Caco-2 (cell line): ENCODE measurements at regions of chr10 and their contacts with region 1.

Region 1: DNA sequence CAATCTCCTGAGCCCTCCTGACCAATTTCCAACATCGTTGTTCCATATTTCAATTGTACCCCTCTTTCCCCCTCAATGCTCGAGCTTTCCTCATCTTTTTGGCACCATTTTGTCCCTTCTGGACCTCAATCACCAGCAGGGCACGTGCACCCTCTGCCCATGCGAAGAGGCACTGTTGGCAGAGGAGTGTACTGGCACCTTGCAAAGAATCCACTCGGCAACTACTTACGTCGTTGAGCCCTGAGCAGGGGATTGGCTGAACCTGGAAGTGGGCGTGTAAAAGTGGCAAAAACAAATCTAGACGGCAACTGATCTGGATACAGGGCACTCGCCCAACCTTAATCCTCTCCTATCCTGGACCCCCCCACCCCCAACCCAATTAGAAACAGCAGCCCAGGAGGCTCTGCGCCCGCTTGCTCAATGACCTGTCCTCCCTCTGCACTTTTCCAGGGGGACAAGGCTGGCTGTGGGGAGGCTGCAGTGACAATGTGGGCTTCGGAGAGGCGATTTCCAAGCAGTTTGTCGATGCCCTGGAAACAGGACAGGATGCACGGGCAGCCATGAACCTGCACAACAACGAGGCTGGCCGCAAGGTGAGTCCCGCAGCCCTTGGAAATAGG is 18.8 kb downstream of the WNT8B start:
- DNase-seq: peak; percentile 83 to 88
- H3K4me3 ChIP-seq: peak overlapping the region; percentile 44
- H3K4me3 Mint-ChIP-seq: peak overlapping the region; percentile 74
- H3K27ac Mint-ChIP-seq: no peak overlapping the region
- H3K4me1 ChIP-seq: no peaks in the 10 kb centered on the region
- H3K4me1 Mint-ChIP-seq: peaks cover 13% of the 10 kb centered on the region
- H3K27me3 ChIP-seq: no peaks in the 10 kb centered on the region; the same call in 1 of the 2 replicates
- H3K27me3 Mint-ChIP-seq: peaks cover 18% of the 10 kb centered on the region
- CTCF ChIP-seq: no peak

Region 2: GRCh38 chr10:100433253-100434240 is 48.0 kb before region 1 on chr10:
- CTCF ChIA-PET with region 1: interaction called, 5 read pairs
- POLR2A ChIA-PET with region 1: no interaction called
- intact Hi-C with region 1: loop called (anchors 1 kb)
- DNase-seq: peak; percentile 95
- H3K4me3 ChIP-seq: no peak overlapping the region
- H3K4me3 Mint-ChIP-seq: no peak overlapping the region
- H3K27ac Mint-ChIP-seq: no peak overlapping the region
- H3K4me1 ChIP-seq: no peaks in the 10 kb centered on the region
- H3K4me1 Mint-ChIP-seq: no peaks in the 10 kb centered on the region
- H3K27me3 ChIP-seq: no peaks in the 10 kb centered on the region
- H3K27me3 Mint-ChIP-seq: no peaks in the 10 kb centered on the region
- CTCF ChIP-seq: peak; percentile 96 to 97

Region 3: GRCh38 chr10:100446130-100446761 is 35.3 kb before region 1 on chr10:
- CTCF ChIA-PET with region 1: interaction called, 10 read pairs
- POLR2A ChIA-PET with region 1: no interaction called
- intact Hi-C with region 1: no loop called
- DNase-seq: peak; percentile 37 to 46
- H3K4me3 ChIP-seq: no peak overlapping the region
- H3K4me3 Mint-ChIP-seq: no peak overlapping the region
- H3K27ac Mint-ChIP-seq: no peak overlapping the region
- H3K4me1 ChIP-seq: no peaks in the 10 kb centered on the region
- H3K4me1 Mint-ChIP-seq: peaks cover 13% of the 10 kb centered on the region
- H3K27me3 ChIP-seq: no peaks in the 10 kb centered on the region; the same call in 1 of the 2 replicates
- H3K27me3 Mint-ChIP-seq: no peaks in the 10 kb centered on the region
- CTCF ChIP-seq: peak in 1 of 2 experiments; percentile 51

Region 4: GRCh38 chr10:100518761-100519241 is 37.2 kb after region 1 on chr10:
- CTCF ChIA-PET with region 1: interaction called, 49 read pairs
- POLR2A ChIA-PET with region 1: no interaction called
- intact Hi-C with region 1: no loop called
- DNase-seq: peak; percentile 52 to 66
- H3K4me3 ChIP-seq: no peak overlapping the region
- H3K4me3 Mint-ChIP-seq: no peak overlapping the region
- H3K27ac Mint-ChIP-seq: no peak overlapping the region
- H3K4me1 ChIP-seq: no peaks in the 10 kb centered on the region
- H3K4me1 Mint-ChIP-seq: no peaks in the 10 kb centered on the region
- H3K27me3 ChIP-seq: no peaks in the 10 kb centered on the region
- H3K27me3 Mint-ChIP-seq: no peaks in the 10 kb centered on the region
- CTCF ChIP-seq: peak; percentile 58 to 70

Region 5: DNA sequence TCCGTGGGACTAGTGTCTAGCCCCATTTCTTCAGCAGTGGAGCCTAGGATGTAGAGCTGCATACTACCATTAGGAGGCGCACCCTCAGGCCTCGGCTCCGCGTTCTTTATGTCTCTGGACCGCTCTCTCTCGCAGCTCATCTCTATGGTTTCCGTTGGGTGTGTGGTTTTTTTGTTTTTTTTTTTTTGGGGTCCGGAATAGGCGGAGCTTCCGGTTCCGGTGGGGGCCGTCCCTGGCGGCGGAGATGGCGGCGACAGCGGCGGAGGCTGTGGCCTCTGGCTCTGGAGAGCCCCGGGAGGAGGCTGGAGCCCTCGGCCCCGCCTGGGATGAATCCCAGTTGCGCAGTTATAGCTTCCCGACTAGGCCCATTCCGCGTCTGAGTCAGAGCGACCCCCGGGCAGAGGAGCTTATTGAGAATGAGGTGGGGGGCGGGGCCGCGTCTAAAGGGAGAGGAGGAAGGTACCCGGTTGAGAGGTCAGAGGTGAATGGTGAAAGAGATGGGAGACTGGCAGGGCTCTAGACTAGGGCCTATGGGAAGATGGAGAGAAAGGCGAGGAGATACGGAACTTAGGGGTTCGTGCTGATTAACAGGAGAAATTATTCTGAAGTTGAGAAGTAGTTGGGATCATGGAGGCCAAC is 54.3 kb after region 1 on chr10 and contains the start of gene HIF1AN:
- CTCF ChIA-PET with region 1: interaction called, 12 read pairs
- POLR2A ChIA-PET with region 1: no interaction called
- intact Hi-C with region 1: no loop called
- DNase-seq: peak; percentile 93 to 94
- H3K4me3 ChIP-seq: peak within 1 kb of the TSS; percentile 62
- H3K4me3 Mint-ChIP-seq: peak within 1 kb of the TSS; percentile 29
- H3K27ac Mint-ChIP-seq: no peak within 1 kb of the TSS
- H3K4me1 ChIP-seq: no peaks in the 10 kb centered on the region; the same call in 1 of the 2 replicates
- H3K4me1 Mint-ChIP-seq: no peaks in the 10 kb centered on the region
- H3K27me3 ChIP-seq: no peaks in the 10 kb centered on the region
- H3K27me3 Mint-ChIP-seq: no peaks in the 10 kb centered on the region
- CTCF ChIP-seq: peak; percentile 85 to 97
- total RNA-seq, gene HIF1AN: 71.2 and 72.5 TPM in 2 replicates